ENCODE measurements at regions of chr5 and their contacts with region 1.

Region 1: DNA sequence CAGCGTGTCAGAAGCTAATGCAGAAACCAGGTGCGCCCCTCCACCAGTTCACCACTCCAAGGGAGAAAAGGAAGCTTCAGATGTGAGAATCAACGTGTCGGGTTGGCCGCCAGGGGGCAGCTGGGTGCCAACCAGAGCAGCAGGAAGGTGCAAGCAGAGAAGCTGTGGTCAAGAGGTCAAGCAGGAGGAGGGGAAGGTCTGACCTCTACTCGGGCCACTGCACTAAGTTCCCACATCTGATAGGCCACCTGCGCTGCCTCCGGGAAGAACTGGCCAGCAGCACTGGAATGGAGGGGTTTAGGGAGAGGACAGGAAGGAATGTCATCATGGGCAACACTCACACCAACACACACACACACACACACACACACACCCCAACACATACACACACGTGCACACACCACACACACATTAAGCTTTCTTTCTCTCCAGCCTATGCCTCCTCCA is 31.4 kb downstream of the ANXA6 start:
- DNase-seq: peak; percentile 76
- H3K4me3 Mint-ChIP-seq: no peak overlapping the region
- H3K27ac Mint-ChIP-seq: no peak overlapping the region
- H3K4me1 Mint-ChIP-seq: peaks cover 12% of the 10 kb centered on the region
- H3K27me3 Mint-ChIP-seq: peaks cover 21% of the 10 kb centered on the region
- CTCF ChIP-seq: peak; percentile 91

Region 2: DNA sequence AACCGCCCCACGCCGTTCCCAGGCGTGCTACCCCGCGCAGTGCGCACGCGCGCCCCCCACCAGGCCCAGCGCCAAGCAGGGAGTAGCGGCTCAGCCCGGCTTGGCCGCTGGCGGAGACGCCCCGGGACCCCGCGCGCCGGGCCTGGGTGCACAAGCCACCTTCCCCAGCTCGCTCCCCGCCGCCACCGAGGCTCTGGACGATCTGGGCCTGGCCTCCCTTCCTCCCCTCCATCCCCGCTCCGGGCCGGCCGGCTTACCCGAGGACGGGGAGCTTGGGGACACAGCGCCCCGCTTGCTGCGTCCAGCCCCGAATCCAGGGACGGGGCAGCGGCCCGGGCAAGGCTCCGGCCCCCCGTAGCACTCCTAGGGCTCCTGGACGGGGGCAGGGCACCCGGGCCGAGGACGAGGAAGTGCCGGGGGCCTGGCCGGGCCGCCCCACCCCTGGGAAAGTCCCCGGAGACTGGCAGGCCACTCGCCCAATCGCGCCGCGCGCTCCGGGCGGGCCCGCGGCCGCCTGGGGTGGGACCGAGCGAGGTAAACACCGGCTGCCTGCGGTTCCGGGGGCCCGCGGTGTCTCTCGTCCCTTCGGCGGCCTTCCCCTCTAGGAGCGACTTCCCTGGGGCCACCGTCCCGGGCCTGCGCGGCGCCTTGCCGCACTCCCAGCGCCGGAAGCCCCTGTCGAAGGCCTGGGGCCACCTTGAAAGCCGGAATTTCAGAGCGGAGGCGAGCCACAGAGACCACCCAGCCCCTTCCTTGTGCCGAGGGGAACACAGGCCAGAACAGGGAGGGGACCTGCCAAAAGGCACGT is 45.4 kb before region 1 on chr5 and contains the start of gene TNIP1:
- CTCF ChIA-PET with region 1: interaction called, 1,587 read pairs
- POLR2A ChIA-PET with region 1: interaction called, 3 read pairs
- intact Hi-C with region 1: no loop called
- DNase-seq: peak; percentile 94
- H3K4me3 Mint-ChIP-seq: peak within 1 kb of the TSS; percentile 74
- H3K27ac Mint-ChIP-seq: peak within 1 kb of the TSS; percentile 59
- H3K4me1 Mint-ChIP-seq: peaks cover 78% of the 10 kb centered on the region
- H3K27me3 Mint-ChIP-seq: no peaks in the 10 kb centered on the region
- CTCF ChIP-seq: no peak
- total RNA-seq, gene TNIP1: 246 and 342 TPM in 2 replicates

Region 3: GRCh38 chr5:151141535-151141934 is 15.3 kb after region 1 on chr5:
- CTCF ChIA-PET with region 1: interaction called, 206 read pairs
- POLR2A ChIA-PET with region 1: interaction called, 5 read pairs
- intact Hi-C with region 1: no loop called
- DNase-seq: no peak
- H3K4me3 Mint-ChIP-seq: no peak overlapping the region
- H3K27ac Mint-ChIP-seq: no peak overlapping the region
- H3K4me1 Mint-ChIP-seq: peaks cover 7% of the 10 kb centered on the region
- H3K27me3 Mint-ChIP-seq: no peaks in the 10 kb centered on the region
- CTCF ChIP-seq: no peak

Region 4: DNA sequence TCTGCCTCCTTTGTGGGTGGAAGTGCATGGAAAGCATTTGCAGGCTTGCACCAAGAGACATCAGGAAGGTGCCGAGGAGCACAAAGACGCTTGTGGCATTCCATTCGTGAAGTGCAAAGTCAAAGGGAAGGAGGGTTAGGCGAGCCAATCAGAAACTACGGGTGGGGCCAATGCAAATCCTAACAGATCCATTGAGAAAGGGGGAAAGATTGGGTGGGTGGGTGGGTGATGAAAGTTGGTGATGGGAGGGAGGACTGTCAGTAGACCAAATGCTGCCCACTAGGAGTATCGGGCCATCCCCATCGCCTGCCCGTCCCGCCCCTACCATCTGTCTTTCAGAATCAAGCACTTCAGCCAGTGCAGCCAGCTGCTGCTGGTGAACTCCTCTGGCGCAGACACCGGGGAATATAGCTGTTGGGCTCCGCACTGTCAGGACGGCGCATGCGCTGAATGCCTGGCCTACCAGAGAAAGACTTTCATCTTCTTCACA is 48.4 kb after region 1 on chr5:
- CTCF ChIA-PET with region 1: interaction called, 745 read pairs
- POLR2A ChIA-PET with region 1: no interaction called
- intact Hi-C with region 1: no loop called
- DNase-seq: no peak
- H3K4me3 Mint-ChIP-seq: no peak overlapping the region
- H3K27ac Mint-ChIP-seq: no peak overlapping the region
- H3K4me1 Mint-ChIP-seq: no peaks in the 10 kb centered on the region
- H3K27me3 Mint-ChIP-seq: no peaks in the 10 kb centered on the region
- CTCF ChIP-seq: no peak

Region 5: GRCh38 chr5:151223469-151224264 is 97.4 kb after region 1 on chr5 and contains the start of gene CCDC69:
- CTCF ChIA-PET with region 1: interaction called, 34 read pairs
- POLR2A ChIA-PET with region 1: no interaction called
- intact Hi-C with region 1: no loop called
- DNase-seq: peak; percentile 74
- H3K4me3 Mint-ChIP-seq: peak within 1 kb of the TSS; percentile 84
- H3K27ac Mint-ChIP-seq: peak within 1 kb of the TSS; percentile 75
- H3K4me1 Mint-ChIP-seq: peaks cover 18% of the 10 kb centered on the region
- H3K27me3 Mint-ChIP-seq: no peaks in the 10 kb centered on the region
- CTCF ChIP-seq: no peak
- total RNA-seq, gene CCDC69: 2.8 and 3.0 TPM in 2 replicates

Region 6: GRCh38 chr5:151298063-151298855 is 172.0 kb after region 1 on chr5:
- CTCF ChIA-PET with region 1: interaction called, 14 read pairs
- POLR2A ChIA-PET with region 1: no interaction called
- intact Hi-C with region 1: loop called (anchors 1 kb)
- DNase-seq: peak; percentile 90
- H3K4me3 Mint-ChIP-seq: no peak overlapping the region
- H3K27ac Mint-ChIP-seq: no peak overlapping the region
- H3K4me1 Mint-ChIP-seq: peaks cover 23% of the 10 kb centered on the region
- H3K27me3 Mint-ChIP-seq: peaks cover 36% of the 10 kb centered on the region
- CTCF ChIP-seq: peak; percentile 68

Region 7: DNA sequence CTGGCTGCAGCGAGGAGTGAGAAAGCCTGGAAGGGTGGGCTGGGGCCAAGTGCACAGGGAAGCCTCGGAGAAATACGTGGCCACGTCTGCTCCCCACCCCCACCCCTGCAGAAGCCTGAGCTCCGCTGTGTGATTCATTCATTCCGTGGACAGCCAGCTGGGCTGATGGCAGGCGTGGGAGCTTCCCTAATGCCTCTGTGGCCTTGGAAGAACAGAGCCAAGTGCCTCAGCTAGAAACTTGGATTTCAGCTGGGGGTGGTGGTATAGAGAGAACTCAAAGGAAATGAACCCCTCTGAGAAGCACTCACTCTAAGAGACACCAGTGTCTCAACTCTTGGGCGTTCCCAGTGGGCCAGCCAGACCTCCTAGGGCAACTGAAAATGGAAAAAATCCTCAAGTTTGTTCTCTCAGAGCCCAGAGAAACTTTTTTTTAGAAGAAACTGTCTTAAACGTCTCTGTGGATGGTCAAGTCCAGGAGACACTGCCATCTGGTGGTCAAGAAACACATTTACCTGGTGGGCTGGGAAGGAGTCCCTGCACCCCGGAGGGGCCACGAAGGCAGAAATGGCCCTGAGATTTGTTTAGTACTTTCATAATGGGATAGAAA is 614.2 kb after region 1 on chr5:
- CTCF ChIA-PET with region 1: no interaction called
- POLR2A ChIA-PET with region 1: no interaction called
- intact Hi-C with region 1: loop called (anchors 10 kb)
- DNase-seq: peak; percentile 80
- H3K4me3 Mint-ChIP-seq: peak overlapping the region; percentile 45
- H3K27ac Mint-ChIP-seq: peak overlapping the region; percentile 86
- H3K4me1 Mint-ChIP-seq: peaks cover 55% of the 10 kb centered on the region
- H3K27me3 Mint-ChIP-seq: no peaks in the 10 kb centered on the region
- CTCF ChIP-seq: peak; percentile 93

Region 8: GRCh38 chr5:152046361-152046760 is 920.1 kb after region 1 on chr5:
- CTCF ChIA-PET with region 1: no interaction called
- POLR2A ChIA-PET with region 1: no interaction called
- intact Hi-C with region 1: no loop called
- DNase-seq: no peak
- H3K4me3 Mint-ChIP-seq: no peak overlapping the region
- H3K27ac Mint-ChIP-seq: no peak overlapping the region
- H3K4me1 Mint-ChIP-seq: no peaks in the 10 kb centered on the region
- H3K27me3 Mint-ChIP-seq: peaks cover 23% of the 10 kb centered on the region
- CTCF ChIP-seq: no peak

Measured in MCF 10A (cell line).